Activated CD4-positive, alpha-beta T cell treated with anti-CD3 and anti-CD28 coated beads for 36 hours (primary cell): ENCODE measurements at regions of chr14 and their contacts with region 1.

Region 1: DNA sequence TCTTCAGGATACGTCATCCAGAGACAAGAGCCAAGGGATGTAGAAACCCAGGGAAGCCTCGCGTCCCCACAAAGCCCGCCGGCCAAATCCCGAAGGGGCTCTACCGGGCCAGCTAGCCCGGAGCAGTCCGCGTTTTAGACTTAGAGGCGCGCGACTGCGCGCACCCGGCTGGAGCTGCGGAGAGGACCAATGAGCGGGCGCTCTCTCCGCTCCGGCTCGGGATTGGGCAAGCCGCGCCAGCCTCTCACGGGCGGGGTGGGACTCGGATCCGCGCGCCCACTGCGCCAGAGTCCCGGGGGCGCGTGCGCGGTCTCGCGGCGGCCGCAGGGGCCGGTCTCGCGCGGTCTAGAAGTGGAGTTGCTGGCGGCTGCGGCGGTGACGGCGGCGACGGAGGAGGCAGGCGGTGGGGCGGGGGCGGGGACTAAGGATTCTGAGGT is 239 bp upstream of the PALS1 start:
- DNase-seq: peak; percentile 97
- ATAC-seq: peak; percentile 95
- H3K4me3 Mint-ChIP-seq: peak overlapping the region; percentile 79
- H3K27ac Mint-ChIP-seq: peak overlapping the region; percentile 83
- H3K4me1 Mint-ChIP-seq: peaks cover 21% of the 10 kb centered on the region
- H3K27me3 Mint-ChIP-seq: peaks cover 8% of the 10 kb centered on the region

Region 2: DNA sequence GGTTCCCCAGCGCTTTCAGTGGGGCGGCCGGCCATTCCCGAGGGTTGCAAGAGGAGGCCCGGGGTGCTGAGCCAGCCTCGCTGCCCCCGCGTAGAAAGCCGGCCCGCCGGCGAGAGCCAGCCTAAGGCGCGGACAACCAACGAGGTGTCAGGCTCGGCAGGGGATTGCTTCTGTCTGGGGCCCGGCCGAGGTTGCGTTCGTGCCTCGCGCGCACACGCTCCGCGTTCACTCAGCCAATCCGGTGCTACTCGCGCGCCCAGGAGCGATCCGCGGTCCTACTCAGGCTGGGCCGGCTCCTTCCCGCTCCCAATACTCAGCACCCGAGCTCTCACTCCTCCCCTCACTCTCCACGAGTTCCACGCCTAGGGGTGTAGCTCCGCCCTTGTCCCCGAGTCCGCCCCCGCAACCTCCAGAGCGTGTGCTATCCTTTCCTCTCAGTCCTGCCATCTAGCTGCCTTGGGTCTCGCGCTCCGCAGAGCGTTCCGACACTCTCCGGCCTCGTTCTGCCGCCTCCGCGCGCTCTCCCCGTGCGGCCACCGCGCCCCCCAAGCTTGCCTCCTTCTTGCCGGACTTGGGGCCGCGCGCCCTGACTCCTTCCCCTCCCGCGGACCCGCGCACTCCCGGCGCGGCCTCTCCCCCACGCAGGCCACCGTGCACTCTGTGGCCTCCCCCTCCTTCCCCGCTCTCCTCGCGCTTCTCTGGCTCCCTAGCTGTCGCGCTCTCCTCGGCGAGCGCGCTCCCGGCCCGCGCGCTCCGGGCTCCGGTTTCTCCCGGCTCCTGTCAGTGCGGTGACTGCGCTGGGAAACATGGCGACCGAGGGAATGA is 733.1 kb before region 1 on chr14 and contains the start of gene GPHN:
- CTCF ChIA-PET with region 1: no interaction called
- POLR2A ChIA-PET with region 1: no interaction called
- intact Hi-C with region 1: loop called (anchors 1 kb)
- DNase-seq: peak; percentile 96
- ATAC-seq: peak; percentile 96
- H3K4me3 Mint-ChIP-seq: peak within 1 kb of the TSS; percentile 90
- H3K27ac Mint-ChIP-seq: peak within 1 kb of the TSS; percentile 94
- H3K4me1 Mint-ChIP-seq: peaks cover 39% of the 10 kb centered on the region
- H3K27me3 Mint-ChIP-seq: peaks cover 3% of the 10 kb centered on the region
- total RNA-seq, gene GPHN: 29.8 to 37.5 TPM

Region 3: GRCh38 chr14:67137744-67138371 is 103.1 kb before region 1 on chr14:
- CTCF ChIA-PET with region 1: no interaction called
- POLR2A ChIA-PET with region 1: no interaction called
- intact Hi-C with region 1: loop called in 1 of 2 experiments (anchors 1 kb)
- DNase-seq: no peak
- ATAC-seq: no peak
- H3K4me3 Mint-ChIP-seq: no peak overlapping the region
- H3K27ac Mint-ChIP-seq: no peak overlapping the region
- H3K4me1 Mint-ChIP-seq: peaks cover 28% of the 10 kb centered on the region
- H3K27me3 Mint-ChIP-seq: no peaks in the 10 kb centered on the region

Region 4: GRCh38 chr14:67187210-67187609 is 53.8 kb before region 1 on chr14:
- CTCF ChIA-PET with region 1: no interaction called
- POLR2A ChIA-PET with region 1: no interaction called
- intact Hi-C with region 1: loop called in 1 of 2 experiments (anchors 1 kb)
- DNase-seq: no peak
- ATAC-seq: no peak
- H3K4me3 Mint-ChIP-seq: no peak overlapping the region
- H3K27ac Mint-ChIP-seq: no peak overlapping the region
- H3K4me1 Mint-ChIP-seq: peaks cover 20% of the 10 kb centered on the region
- H3K27me3 Mint-ChIP-seq: no peaks in the 10 kb centered on the region

Region 5: GRCh38 chr14:67619446-67620216 is 378.6 kb after region 1 on chr14 and contains the start of gene ARG2:
- CTCF ChIA-PET with region 1: no interaction called
- POLR2A ChIA-PET with region 1: no interaction called
- intact Hi-C with region 1: loop called in 1 of 2 experiments (anchors 10 kb)
- DNase-seq: peak; percentile 99
- ATAC-seq: peak; percentile 88
- H3K4me3 Mint-ChIP-seq: peak within 1 kb of the TSS; percentile 77
- H3K27ac Mint-ChIP-seq: peak within 1 kb of the TSS; percentile 73
- H3K4me1 Mint-ChIP-seq: peaks cover 31% of the 10 kb centered on the region
- H3K27me3 Mint-ChIP-seq: peaks cover 8% of the 10 kb centered on the region
- total RNA-seq, gene ARG2: 11.9 TPM

Region 6: DNA sequence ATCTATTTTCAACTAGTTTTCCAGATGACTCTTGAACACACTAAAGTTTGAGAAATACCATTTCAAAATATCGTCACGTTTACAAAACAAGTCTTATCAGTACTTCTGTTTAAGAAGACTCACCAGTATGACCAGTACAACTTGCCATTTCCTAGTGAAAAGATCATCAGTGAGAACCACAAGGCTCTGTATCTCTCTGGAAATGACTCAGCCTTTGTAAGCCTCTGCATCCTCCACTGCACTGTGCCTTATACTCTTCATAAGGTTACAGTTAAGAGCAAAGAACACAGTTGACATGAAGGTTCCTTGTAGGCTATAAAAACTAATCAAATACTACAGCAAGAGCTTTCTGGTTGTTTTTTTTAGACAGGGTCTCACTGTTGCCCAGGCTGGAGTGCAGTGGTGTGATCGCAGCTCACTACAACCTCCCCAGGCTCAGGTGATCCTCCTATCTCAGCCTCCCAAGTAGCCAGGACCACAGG is 439.2 kb after region 1 on chr14:
- CTCF ChIA-PET with region 1: no interaction called
- POLR2A ChIA-PET with region 1: no interaction called
- intact Hi-C with region 1: no loop called
- DNase-seq: peak; percentile 37
- ATAC-seq: peak; percentile 99
- H3K4me3 Mint-ChIP-seq: no peak overlapping the region
- H3K27ac Mint-ChIP-seq: peak overlapping the region; percentile 31
- H3K4me1 Mint-ChIP-seq: peaks cover 46% of the 10 kb centered on the region
- H3K27me3 Mint-ChIP-seq: no peaks in the 10 kb centered on the region

Region 7: GRCh38 chr14:67816326-67817002 is 575.5 kb after region 1 on chr14 and contains the start of gene ZFYVE26:
- CTCF ChIA-PET with region 1: no interaction called
- POLR2A ChIA-PET with region 1: no interaction called
- intact Hi-C with region 1: loop called in 1 of 2 experiments (anchors 2 kb)
- DNase-seq: peak; percentile 95
- ATAC-seq: peak; percentile 89
- H3K4me3 Mint-ChIP-seq: peak within 1 kb of the TSS; percentile 89
- H3K27ac Mint-ChIP-seq: peak within 1 kb of the TSS; percentile 92
- H3K4me1 Mint-ChIP-seq: peaks cover 45% of the 10 kb centered on the region
- H3K27me3 Mint-ChIP-seq: no peaks in the 10 kb centered on the region
- total RNA-seq, gene ZFYVE26: 13.0 to 14.2 TPM